Activated CD4-positive, alpha-beta memory T cell treated with anti-CD3 and anti-CD28 coated beads, Interleukin-2, amount 10 ng/mL, durations not matched to agents 7 days and 5 days (primary cell): ENCODE measurements at regions of chrX and their contacts with region 1.

Region 1: GRCh38 chrX:38327007-38327774 is at the start of gene RPGR:
- DNase-seq: peak; percentile 92
- H3K4me3 Mint-ChIP-seq: peak within 1 kb of the TSS; percentile 88
- H3K27ac Mint-ChIP-seq: peak within 1 kb of the TSS; percentile 82
- H3K4me1 Mint-ChIP-seq: peaks cover 25% of the 10 kb centered on the region
- H3K27me3 Mint-ChIP-seq: no peaks in the 10 kb centered on the region
- total RNA-seq, gene RPGR: 4.5 to 5.9 TPM

Region 2: GRCh38 chrX:38220024-38220414 is 107.2 kb before region 1 on chrX:
- CTCF ChIA-PET with region 1: interaction called, 18 read pairs
- POLR2A ChIA-PET with region 1: no interaction called
- DNase-seq: peak; percentile 24
- H3K4me3 Mint-ChIP-seq: no peak overlapping the region
- H3K27ac Mint-ChIP-seq: no peak overlapping the region
- H3K4me1 Mint-ChIP-seq: peaks cover 4% of the 10 kb centered on the region
- H3K27me3 Mint-ChIP-seq: peaks cover 40% of the 10 kb centered on the region

Region 3: DNA sequence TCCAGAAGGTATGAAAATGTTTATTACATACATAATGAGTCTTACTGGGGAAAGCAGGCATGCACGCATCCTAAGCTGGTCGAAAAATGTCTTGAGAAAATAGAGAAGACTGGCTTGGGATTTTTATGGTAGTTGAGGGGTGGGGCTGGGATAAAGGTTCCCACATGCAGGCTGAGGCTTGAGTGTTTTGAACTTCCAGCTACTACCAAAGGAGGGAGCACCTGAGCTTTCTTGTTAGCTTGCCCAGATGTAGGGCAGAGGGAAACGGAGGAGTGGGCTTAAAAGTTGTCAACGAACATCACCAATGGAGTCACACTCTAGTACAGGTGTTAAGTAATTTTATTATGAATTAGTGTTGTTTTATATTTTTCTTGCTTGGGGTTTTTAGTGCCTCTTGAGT is 67.0 kb before region 1 on chrX:
- CTCF ChIA-PET with region 1: interaction called, 10 read pairs
- POLR2A ChIA-PET with region 1: no interaction called
- DNase-seq: no peak
- H3K4me3 Mint-ChIP-seq: no peak overlapping the region
- H3K27ac Mint-ChIP-seq: no peak overlapping the region
- H3K4me1 Mint-ChIP-seq: no peaks in the 10 kb centered on the region
- H3K27me3 Mint-ChIP-seq: no peaks in the 10 kb centered on the region

Region 4: GRCh38 chrX:38304010-38304409 is 23.2 kb before region 1 on chrX:
- CTCF ChIA-PET with region 1: interaction called, 10 read pairs
- POLR2A ChIA-PET with region 1: interaction called, 4 read pairs
- DNase-seq: no peak
- H3K4me3 Mint-ChIP-seq: no peak overlapping the region
- H3K27ac Mint-ChIP-seq: no peak overlapping the region
- H3K4me1 Mint-ChIP-seq: no peaks in the 10 kb centered on the region
- H3K27me3 Mint-ChIP-seq: no peaks in the 10 kb centered on the region